ENCODE measurements at regions of chr20 and their contacts with region 1.

Region 1: DNA sequence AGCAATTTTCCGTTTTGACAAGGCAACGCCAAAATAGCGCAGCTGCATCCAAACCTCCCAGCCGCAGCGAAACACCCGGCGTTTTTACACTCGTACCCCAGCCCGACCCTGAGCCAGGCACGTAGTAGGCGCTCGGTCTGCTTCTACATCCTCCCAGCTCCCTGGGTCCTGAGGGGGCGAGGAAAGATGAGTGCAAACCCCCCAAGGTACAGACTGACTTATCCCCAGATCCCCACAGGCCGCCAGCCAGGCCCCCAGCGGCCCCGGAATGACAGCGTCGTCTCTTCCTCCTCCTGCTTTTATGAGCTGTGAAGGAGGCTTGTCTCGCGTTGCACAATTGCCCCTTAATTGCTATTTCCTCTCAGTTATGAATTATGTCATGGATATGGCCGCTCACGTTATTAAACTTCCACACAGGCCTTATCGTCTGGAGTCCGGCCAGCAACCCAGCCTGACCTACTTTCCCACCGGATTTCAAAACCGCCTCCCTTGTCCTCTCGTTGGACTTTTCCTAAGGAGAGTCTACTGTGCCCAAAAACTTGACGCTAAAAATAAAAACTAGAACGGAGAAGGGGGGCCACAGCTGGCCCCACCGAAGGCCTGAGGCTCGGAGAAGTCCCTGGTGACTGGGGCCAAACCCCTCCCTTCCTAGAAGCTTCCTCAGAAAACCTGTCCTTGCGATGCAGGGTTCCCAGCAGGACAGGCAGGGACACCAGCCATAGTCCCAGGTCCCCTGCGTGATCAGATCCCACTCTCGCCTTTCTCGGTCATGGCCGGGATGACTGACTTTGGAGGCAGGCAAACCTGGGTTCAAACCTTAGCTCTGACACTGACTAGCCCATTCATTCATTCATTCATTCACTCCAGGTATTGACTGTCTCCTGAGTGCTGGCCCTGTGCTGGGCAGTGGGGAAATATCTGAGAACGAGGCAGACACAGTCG is 130.9 kb upstream of the PTPN1 start:
- DNase-seq: peak; percentile 84 to 94 (median 92)
- ATAC-seq: peak; percentile 79 to 88 (median 86)
- H3K4me3 ChIP-seq: peak overlapping the region in 1 of 4 donors; percentile 10
- H3K27ac ChIP-seq: peak overlapping the region; percentile 65 to 86 (median 80)
- H3K4me1 ChIP-seq: peaks cover 24 to 43% (median 26%) of the 10 kb centered on the region in 3 donors
- H3K27me3 ChIP-seq: no peaks in the 10 kb centered on the region
- CTCF ChIP-seq: no peak

Region 2: DNA sequence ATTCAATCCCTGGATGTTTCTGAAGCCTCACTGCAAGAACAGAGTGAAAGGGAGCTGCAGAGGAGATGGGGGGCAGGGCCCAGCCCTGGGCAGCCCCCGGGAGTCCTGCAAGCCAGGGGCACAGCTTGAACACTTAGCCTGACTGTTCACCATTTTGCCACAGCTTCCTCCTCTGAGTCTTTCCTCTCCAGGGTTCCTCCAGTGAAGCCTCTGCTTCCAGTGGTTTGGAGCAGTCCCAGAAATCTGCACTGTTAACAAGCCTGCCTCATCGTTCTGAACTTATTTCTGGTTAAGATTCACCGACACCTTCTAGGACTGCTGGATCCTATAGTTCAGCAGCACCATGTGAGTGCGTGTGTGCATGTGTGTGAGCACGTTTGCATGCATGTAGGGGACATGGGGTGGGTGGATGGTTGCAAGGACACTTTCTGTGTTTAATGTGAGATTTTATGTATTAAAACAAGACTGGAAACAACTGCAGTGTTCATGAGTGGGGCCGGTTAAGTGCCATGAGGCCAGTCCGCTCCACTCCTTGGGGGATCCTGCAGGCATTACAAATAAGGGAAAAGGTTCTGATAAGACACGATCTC is 164.1 kb before region 1 on chr20:
- intact Hi-C with region 1: loop called in 1 of 3 experiments (anchors 10 kb)
- DNase-seq: peak in 2 of 6 donors; percentile 4 to 9
- ATAC-seq: no peak
- H3K4me3 ChIP-seq: no peak overlapping the region
- H3K27ac ChIP-seq: no peak overlapping the region
- H3K4me1 ChIP-seq: peaks cover 17 to 24% (median 19%) of the 10 kb centered on the region in 3 donors
- H3K27me3 ChIP-seq: no peaks in the 10 kb centered on the region
- CTCF ChIP-seq: no peak

Region 3: DNA sequence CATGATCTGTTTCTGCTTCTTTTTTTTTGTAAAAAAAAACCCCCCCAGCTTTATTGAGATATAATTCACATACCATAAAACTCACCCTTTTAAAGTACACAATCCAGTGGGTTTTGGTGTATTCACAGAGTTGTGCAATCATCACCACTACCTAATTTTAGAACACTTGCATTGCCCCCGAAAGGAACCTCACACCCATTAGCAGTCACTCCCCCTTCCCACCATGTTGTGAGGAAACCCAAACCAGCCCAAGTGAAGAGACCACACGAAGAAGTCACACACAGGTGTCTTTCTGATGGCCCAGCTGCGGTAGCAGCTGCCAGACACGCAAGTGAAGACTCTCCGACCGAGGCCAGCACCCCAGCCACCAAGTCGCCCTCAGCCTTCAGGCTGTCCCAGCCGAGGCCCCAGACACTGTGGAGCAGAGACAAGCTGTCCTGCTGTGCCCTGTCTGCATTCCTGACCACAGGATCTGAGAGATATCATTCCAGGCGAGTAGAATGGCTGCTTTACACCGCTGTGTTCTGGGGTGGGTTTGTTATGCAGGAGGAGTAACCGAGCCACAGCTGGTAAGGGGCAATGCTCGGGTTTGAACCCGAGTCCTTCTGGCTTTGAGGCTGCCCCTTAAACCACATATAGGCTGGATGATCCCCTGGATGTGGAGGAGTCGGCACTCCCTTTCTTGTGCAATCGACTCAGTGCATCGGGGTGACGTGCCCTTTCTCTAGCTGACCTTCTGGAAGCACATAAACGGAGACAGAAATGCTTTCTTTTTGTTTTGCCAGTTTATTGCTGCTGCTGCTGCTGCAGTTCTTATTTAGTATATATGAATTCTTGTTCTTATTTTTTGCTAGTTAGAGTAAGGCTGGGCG is 71.8 kb after region 1 on chr20:
- intact Hi-C with region 1: loop called in 1 of 3 experiments (anchors 10 kb)
- DNase-seq: no peak
- ATAC-seq: peak in 1 of 4 donors; percentile 24
- H3K4me3 ChIP-seq: no peak overlapping the region
- H3K27ac ChIP-seq: no peak overlapping the region
- H3K4me1 ChIP-seq: peaks cover 7 to 16% (median 7%) of the 10 kb centered on the region in 3 donors
- H3K27me3 ChIP-seq: no peaks in the 10 kb centered on the region
- CTCF ChIP-seq: no peak

Measured in pancreas (tissue), 10 donors.